MCF 10A (cell line): ENCODE measurements at regions of chr11 and their contacts with region 1.

Region 1: GRCh38 chr11:12769834-12770345 is 95.7 kb downstream of the TEAD1 start:
- DNase-seq: peak; percentile 86
- H3K4me3 Mint-ChIP-seq: no peak overlapping the region
- H3K27ac Mint-ChIP-seq: no peak overlapping the region
- H3K4me1 Mint-ChIP-seq: peaks cover 22% of the 10 kb centered on the region
- H3K27me3 Mint-ChIP-seq: no peaks in the 10 kb centered on the region
- CTCF ChIP-seq: no peak

Region 2: GRCh38 chr11:12680246-12680939 is 89.5 kb before region 1 on chr11:
- CTCF ChIA-PET with region 1: interaction called, 5 read pairs
- POLR2A ChIA-PET with region 1: interaction called, 64 read pairs
- intact Hi-C with region 1: loop called (anchors 5 kb)
- DNase-seq: peak; percentile 93
- H3K4me3 Mint-ChIP-seq: peak overlapping the region; percentile 90
- H3K27ac Mint-ChIP-seq: peak overlapping the region; percentile 75
- H3K4me1 Mint-ChIP-seq: peaks cover 63% of the 10 kb centered on the region
- H3K27me3 Mint-ChIP-seq: no peaks in the 10 kb centered on the region
- CTCF ChIP-seq: no peak

Region 3: GRCh38 chr11:12724301-12725046 is 45.4 kb before region 1 on chr11:
- CTCF ChIA-PET with region 1: no interaction called
- POLR2A ChIA-PET with region 1: interaction called, 16 read pairs
- intact Hi-C with region 1: no loop called
- DNase-seq: peak; percentile 97
- H3K4me3 Mint-ChIP-seq: peak overlapping the region; percentile 63
- H3K27ac Mint-ChIP-seq: peak overlapping the region; percentile 96
- H3K4me1 Mint-ChIP-seq: peaks cover 58% of the 10 kb centered on the region
- H3K27me3 Mint-ChIP-seq: no peaks in the 10 kb centered on the region
- CTCF ChIP-seq: no peak

Region 4: GRCh38 chr11:12787847-12788246 is 18.0 kb after region 1 on chr11:
- CTCF ChIA-PET with region 1: interaction called, 3 read pairs
- POLR2A ChIA-PET with region 1: interaction called, 12 read pairs
- intact Hi-C with region 1: no loop called
- DNase-seq: peak; percentile 68
- H3K4me3 Mint-ChIP-seq: no peak overlapping the region
- H3K27ac Mint-ChIP-seq: no peak overlapping the region
- H3K4me1 Mint-ChIP-seq: peaks cover 35% of the 10 kb centered on the region
- H3K27me3 Mint-ChIP-seq: no peaks in the 10 kb centered on the region
- CTCF ChIP-seq: no peak

Region 5: GRCh38 chr11:12841946-12842630 is 72.2 kb after region 1 on chr11:
- CTCF ChIA-PET with region 1: interaction called, 4 read pairs
- POLR2A ChIA-PET with region 1: interaction called, 16 read pairs
- intact Hi-C with region 1: no loop called
- DNase-seq: peak; percentile 62
- H3K4me3 Mint-ChIP-seq: no peak overlapping the region
- H3K27ac Mint-ChIP-seq: peak overlapping the region; percentile 83
- H3K4me1 Mint-ChIP-seq: peaks cover 47% of the 10 kb centered on the region
- H3K27me3 Mint-ChIP-seq: no peaks in the 10 kb centered on the region
- CTCF ChIP-seq: no peak

Region 6: GRCh38 chr11:12989428-12990161 is 219.7 kb after region 1 on chr11:
- CTCF ChIA-PET with region 1: no interaction called
- POLR2A ChIA-PET with region 1: no interaction called
- intact Hi-C with region 1: no loop called
- DNase-seq: no peak
- H3K4me3 Mint-ChIP-seq: no peak overlapping the region
- H3K27ac Mint-ChIP-seq: no peak overlapping the region
- H3K4me1 Mint-ChIP-seq: no peaks in the 10 kb centered on the region
- H3K27me3 Mint-ChIP-seq: no peaks in the 10 kb centered on the region
- CTCF ChIP-seq: no peak